ENCODE measurements at regions of chr6 and their contacts with region 1.

Region 1: GRCh38 chr6:3456755-3457466 is at the start of gene SLC22A23:
- DNase-seq: peak; percentile 69 to 83 (median 77)
- H3K4me3 ChIP-seq: peak within 1 kb of the TSS; percentile 49
- H3K27ac ChIP-seq: peak within 1 kb of the TSS; percentile 41 to 56
- H3K4me1 ChIP-seq: peaks cover 8% of the 10 kb centered on the region
- H3K27me3 ChIP-seq: no peaks in the 10 kb centered on the region
- CTCF ChIP-seq: peak; percentile 30 to 66 (median 62)
- EP300 ChIP-seq: no peak
- POLR2A ChIP-seq: no peak
- total RNA-seq, gene SLC22A23: 3.7 to 31.0 (median 6.9) TPM

Region 2: GRCh38 chr6:3281631-3282475 is 175.1 kb before region 1 on chr6:
- intact Hi-C with region 1: loop called in 3 of 4 experiments (anchors 5 to 10 kb)
- DNase-seq: peak in 4 of 5 donors; percentile 14 to 37 (median 24)
- H3K4me3 ChIP-seq: no peak overlapping the region
- H3K27ac ChIP-seq: no peak overlapping the region
- H3K4me1 ChIP-seq: no peaks in the 10 kb centered on the region
- H3K27me3 ChIP-seq: no peaks in the 10 kb centered on the region
- CTCF ChIP-seq: no peak
- EP300 ChIP-seq: no peak
- POLR2A ChIP-seq: no peak

Region 3: GRCh38 chr6:3721810-3722626 is 265.1 kb after region 1 on chr6:
- intact Hi-C with region 1: loop called in 1 of 4 experiments (anchors 10 kb)
- DNase-seq: no peak
- H3K4me3 ChIP-seq: no peak overlapping the region
- H3K27ac ChIP-seq: no peak overlapping the region
- H3K4me1 ChIP-seq: no peaks in the 10 kb centered on the region
- H3K27me3 ChIP-seq: no peaks in the 10 kb centered on the region
- CTCF ChIP-seq: no peak
- EP300 ChIP-seq: no peak
- POLR2A ChIP-seq: no peak

Measured in ovary (tissue), 10 donors.